Mammary epithelial cell (primary cell): ENCODE measurements at regions of chr16 and their contacts with region 1.

Region 1: GRCh38 chr16:35298460-35299243 is 1839.2 kb downstream of the TP53TG3F start:
- DNase-seq: peak; percentile 38
- H3K4me3 ChIP-seq: no peak overlapping the region
- H3K27ac ChIP-seq: peak overlapping the region; percentile 63
- H3K4me1 ChIP-seq: peaks cover 27% of the 10 kb centered on the region
- H3K27me3 ChIP-seq: no peaks in the 10 kb centered on the region
- CTCF ChIP-seq: no peak

Region 2: DNA sequence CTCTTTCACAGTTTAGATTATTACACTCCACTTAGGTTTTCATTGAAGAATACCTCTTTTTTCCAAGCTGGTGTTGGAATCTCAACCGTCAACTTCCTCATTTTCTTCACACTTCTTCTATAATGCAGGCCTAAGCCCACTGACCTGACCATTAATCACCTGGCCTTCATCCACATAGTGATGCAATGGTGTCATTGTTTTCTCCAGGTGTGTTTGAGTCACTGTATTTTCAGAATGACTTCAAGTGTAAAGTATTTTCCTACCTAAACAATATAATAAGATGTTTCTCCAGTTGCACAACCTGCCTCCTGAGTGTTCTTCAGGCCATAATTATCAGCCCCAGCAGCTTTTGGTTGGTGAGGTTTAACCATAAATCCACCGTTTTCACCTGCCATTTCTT is 164.2 kb before region 1 on chr16:
- CTCF ChIA-PET with region 1: no interaction called
- dilution Hi-C with region 1: no loop called
- in situ Hi-C with region 1: no loop called
- intact Hi-C with region 1: loop called (anchors 2 kb)
- DNase-seq: peak; percentile 95
- H3K4me3 ChIP-seq: no peak overlapping the region
- H3K27ac ChIP-seq: peak overlapping the region; percentile 78
- H3K4me1 ChIP-seq: peaks cover 21% of the 10 kb centered on the region
- H3K27me3 ChIP-seq: no peaks in the 10 kb centered on the region
- CTCF ChIP-seq: no peak

Region 3: GRCh38 chr16:35325936-35326335 is 27.3 kb after region 1 on chr16:
- CTCF ChIA-PET with region 1: no interaction called
- dilution Hi-C with region 1: no loop called
- in situ Hi-C with region 1: no loop called
- intact Hi-C with region 1: no loop called
- DNase-seq: no peak
- H3K4me3 ChIP-seq: no peak overlapping the region
- H3K27ac ChIP-seq: no peak overlapping the region
- H3K4me1 ChIP-seq: no peaks in the 10 kb centered on the region
- H3K27me3 ChIP-seq: no peaks in the 10 kb centered on the region
- CTCF ChIP-seq: no peak

Region 4: GRCh38 chr16:35365675-35366074 is 67.0 kb after region 1 on chr16:
- CTCF ChIA-PET with region 1: no interaction called
- dilution Hi-C with region 1: no loop called
- in situ Hi-C with region 1: no loop called
- intact Hi-C with region 1: loop called (anchors 1 kb)
- DNase-seq: peak; percentile 30
- H3K4me3 ChIP-seq: no peak overlapping the region
- H3K27ac ChIP-seq: no peak overlapping the region
- H3K4me1 ChIP-seq: peaks cover 5% of the 10 kb centered on the region
- H3K27me3 ChIP-seq: no peaks in the 10 kb centered on the region
- CTCF ChIP-seq: no peak

Region 5: GRCh38 chr16:35733971-35734702 is 435.5 kb after region 1 on chr16:
- CTCF ChIA-PET with region 1: no interaction called
- dilution Hi-C with region 1: no loop called
- in situ Hi-C with region 1: no loop called
- intact Hi-C with region 1: loop called (anchors 10 kb)
- DNase-seq: no peak
- H3K4me3 ChIP-seq: no peak overlapping the region
- H3K27ac ChIP-seq: no peak overlapping the region
- H3K4me1 ChIP-seq: no peaks in the 10 kb centered on the region
- H3K27me3 ChIP-seq: no peaks in the 10 kb centered on the region
- CTCF ChIP-seq: no peak